Naive thymus-derived CD4-positive, alpha-beta T cell (primary cell): ENCODE measurements at regions of chr19 and their contacts with region 1.

Region 1: DNA sequence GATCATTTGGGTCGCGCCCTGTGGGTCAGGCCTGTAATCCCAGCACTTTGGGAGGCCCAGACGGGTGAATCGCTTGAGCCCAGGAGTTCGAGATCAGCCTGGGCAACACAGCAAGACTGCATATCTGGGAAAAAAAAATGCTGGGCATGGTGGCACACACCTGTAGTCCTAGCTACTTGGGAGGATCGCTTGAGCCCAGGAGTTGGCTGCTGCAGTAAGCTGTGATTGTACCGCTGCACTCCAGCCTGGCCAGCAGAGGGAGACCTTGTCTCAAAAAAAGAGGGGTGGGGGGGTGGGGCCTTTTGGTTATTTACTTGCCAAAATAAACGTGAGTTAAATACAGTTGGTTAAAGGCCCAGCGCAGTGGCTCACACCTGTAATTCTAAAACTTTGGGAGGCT is 9.8 kb upstream of the ZNF544 start:
- DNase-seq: peak in 3 of 9 donors; percentile 16 to 24 (median 24)
- ATAC-seq: peak; percentile 42
- H3K4me3 ChIP-seq: no peak overlapping the region
- H3K4me3 Mint-ChIP-seq: no peak overlapping the region
- H3K27ac ChIP-seq: no peak overlapping the region
- H3K27ac Mint-ChIP-seq: no peak overlapping the region
- H3K4me1 ChIP-seq: no peaks in the 10 kb centered on the region
- H3K4me1 Mint-ChIP-seq: no peaks in the 10 kb centered on the region
- H3K27me3 ChIP-seq: no peaks in the 10 kb centered on the region
- H3K27me3 Mint-ChIP-seq: peaks cover 0 to 5% (median 0%) of the 10 kb centered on the region in 5 donors

Region 2: GRCh38 chr19:58311345-58311865 is 92.5 kb after region 1 on chr19:
- CTCF ChIA-PET with region 1: no interaction called
- POLR2A ChIA-PET with region 1: no interaction called
- intact Hi-C with region 1: loop called in 1 of 2 experiments (anchors 2 kb)
- DNase-seq: no peak
- ATAC-seq: no peak
- H3K4me3 ChIP-seq: no peak overlapping the region
- H3K4me3 Mint-ChIP-seq: no peak overlapping the region
- H3K27ac ChIP-seq: no peak overlapping the region
- H3K27ac Mint-ChIP-seq: peak overlapping the region in 1 of 9 donors; percentile 4
- H3K4me1 ChIP-seq: peaks cover 6 to 7% of the 10 kb centered on the region in 2 donors
- H3K4me1 Mint-ChIP-seq: peaks cover 16 to 42% (median 34%) of the 10 kb centered on the region in 7 donors
- H3K27me3 ChIP-seq: no peaks in the 10 kb centered on the region
- H3K27me3 Mint-ChIP-seq: no peaks in the 10 kb centered on the region

Region 3: GRCh38 chr19:58475714-58476497 is 257.0 kb after region 1 on chr19 and contains the start of gene ZNF446:
- CTCF ChIA-PET with region 1: no interaction called
- POLR2A ChIA-PET with region 1: no interaction called
- intact Hi-C with region 1: loop called in 1 of 2 experiments (anchors 1 kb)
- DNase-seq: peak; percentile 84 to 97 (median 96)
- ATAC-seq: peak; percentile 92
- H3K4me3 ChIP-seq: peak within 1 kb of the TSS; percentile 77
- H3K4me3 Mint-ChIP-seq: peak within 1 kb of the TSS; percentile 78 to 99 (median 96)
- H3K27ac ChIP-seq: peak within 1 kb of the TSS; percentile 91
- H3K27ac Mint-ChIP-seq: peak within 1 kb of the TSS; percentile 87 to 100 (median 99)
- H3K4me1 ChIP-seq: peaks cover 14 to 16% of the 10 kb centered on the region in 2 donors
- H3K4me1 Mint-ChIP-seq: peaks cover 6 to 29% (median 17%) of the 10 kb centered on the region in 7 donors
- H3K27me3 ChIP-seq: no peaks in the 10 kb centered on the region
- H3K27me3 Mint-ChIP-seq: no peaks in the 10 kb centered on the region
- total RNA-seq, gene ZNF446: 9.5 to 20.0 (median 15.1) TPM